HEK293T (cell line): ENCODE measurements at regions of chr22 and their contacts with region 1.

Region 1: GRCh38 chr22:39319270-39320022 is at the start of gene RPL3:
- DNase-seq: peak; percentile 97

Region 2: DNA sequence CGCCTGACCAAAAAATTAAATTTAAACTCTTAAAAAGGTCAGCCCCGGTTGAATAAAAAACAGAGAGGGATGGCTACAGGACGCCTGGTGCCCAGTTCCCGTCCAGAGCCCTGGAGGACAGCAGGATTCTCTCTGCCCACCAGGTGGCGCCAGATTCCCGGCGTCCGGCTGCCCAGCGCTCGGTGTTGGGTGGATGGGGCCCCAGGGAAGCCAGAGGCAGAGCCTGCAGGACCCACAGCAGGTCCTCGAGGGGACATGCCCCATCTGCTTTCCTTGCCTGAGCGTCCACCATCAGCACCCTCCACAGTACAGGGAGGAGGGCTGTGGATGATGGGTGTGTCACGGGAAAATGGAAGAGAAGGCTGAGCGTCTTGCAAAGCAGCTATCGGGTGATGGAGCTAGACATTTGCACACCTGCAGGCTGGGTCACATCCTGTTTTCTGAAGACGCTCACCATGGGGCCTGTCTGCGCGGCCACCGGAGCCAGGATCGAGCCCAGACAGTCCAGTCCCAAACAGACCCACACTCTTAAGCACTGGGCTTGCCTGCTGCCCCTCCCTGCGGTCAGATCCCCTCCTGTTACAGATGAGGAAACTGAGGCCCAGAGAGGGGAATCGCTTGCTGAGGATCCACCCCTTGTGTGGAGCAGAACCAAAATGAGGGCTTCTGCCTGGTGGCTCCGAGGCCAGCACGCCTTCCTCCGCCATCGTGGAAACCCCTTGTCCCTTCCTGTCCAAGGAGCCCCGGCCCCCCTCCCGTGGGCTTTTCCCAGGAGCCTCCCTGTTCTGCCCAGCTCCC is 148.4 kb before region 1 on chr22:
- CTCF ChIA-PET with region 1: interaction called, 16 read pairs
- POLR2A ChIA-PET with region 1: interaction called, 34 read pairs
- DNase-seq: peak; percentile 92

Region 3: DNA sequence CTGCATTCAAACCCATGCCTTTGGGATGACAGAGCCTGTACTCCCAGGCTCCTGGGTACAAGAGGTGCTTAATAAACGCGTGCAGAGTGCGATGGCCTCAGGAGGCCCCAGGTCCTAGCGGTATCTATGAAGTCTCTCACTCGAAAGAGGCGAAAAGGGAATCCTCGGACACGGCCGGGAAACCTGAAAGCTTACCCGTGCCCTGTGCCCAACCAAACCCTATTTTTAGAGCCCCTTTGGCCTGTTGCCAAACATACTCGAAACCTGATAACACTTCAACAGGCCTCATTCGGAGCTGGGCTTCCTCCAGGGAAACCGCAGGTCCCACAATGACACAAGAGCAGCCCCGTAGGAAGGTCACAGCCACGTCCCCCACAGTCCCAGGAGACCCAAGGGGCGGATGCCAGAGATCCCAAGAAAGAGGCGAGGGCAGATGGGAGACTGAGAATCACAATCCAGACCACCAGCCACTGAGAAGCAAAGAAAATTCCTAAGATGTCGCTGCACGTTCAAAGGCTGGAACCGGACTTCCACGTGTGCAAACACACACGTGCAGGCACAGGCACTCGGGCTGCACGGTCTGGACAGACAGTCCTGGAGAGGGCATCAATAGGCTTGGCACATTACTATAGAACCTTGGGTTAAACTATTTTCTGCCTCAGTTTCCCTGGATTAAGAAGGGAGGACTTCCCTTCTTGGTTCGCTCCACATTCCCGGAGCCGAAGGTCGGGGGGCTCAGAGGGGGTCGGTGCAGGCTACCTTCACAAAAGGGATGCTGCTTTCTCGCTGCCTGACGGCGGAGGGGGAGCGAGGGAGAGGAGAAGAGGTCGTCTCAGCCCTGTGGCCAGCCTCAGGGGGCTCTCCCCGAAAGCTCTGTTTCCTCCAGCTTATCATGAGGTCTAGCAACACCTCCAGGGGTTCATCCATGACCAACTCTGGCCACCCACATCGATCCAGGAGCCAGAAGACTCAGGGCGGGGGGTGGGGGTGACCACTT is 82.8 kb before region 1 on chr22:
- CTCF ChIA-PET with region 1: no interaction called
- POLR2A ChIA-PET with region 1: interaction called, 15 read pairs
- DNase-seq: no peak

Region 4: GRCh38 chr22:39332441-39333064 is 13.1 kb after region 1 on chr22:
- CTCF ChIA-PET with region 1: interaction called, 10 read pairs
- POLR2A ChIA-PET with region 1: interaction called, 176 read pairs
- DNase-seq: no peak

Region 5: DNA sequence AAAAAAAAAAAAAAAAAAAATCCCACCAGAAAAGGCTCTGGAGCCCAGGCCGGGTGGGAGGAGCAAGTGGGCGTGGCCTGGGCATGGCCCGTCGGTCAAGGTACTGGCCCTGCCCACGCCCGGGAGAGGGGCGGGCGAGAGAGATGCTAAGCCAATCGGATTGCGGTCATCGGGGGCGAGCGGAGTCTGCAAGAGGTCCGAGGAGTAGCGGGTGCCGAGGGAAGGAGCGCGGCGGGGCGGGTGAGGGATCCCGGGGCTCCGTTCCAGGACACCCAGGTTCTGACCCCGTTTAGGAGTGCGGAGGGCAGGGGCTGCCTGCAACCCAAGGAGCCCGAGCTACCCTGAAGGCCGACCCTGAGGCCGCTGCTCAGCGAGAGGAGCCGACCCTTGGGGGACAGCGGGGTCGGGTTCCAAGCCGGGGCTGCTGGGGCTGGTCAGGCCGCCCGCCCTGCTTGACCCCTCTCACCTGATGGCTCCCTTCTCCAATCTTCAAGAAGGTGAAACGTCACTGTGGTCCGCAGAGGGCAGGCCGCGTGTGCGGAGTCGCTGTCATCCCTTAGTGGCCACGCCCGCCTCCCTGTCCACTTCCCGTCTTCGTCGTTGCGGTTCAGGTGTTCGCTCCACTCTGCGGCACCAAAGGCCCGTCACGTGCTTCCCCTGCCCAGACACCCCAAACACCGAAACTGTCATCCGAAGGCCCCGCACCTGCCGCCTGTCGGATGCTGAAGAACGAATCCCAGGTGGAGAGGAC is 69.0 kb after region 1 on chr22:
- CTCF ChIA-PET with region 1: no interaction called
- POLR2A ChIA-PET with region 1: interaction called, 21 read pairs
- DNase-seq: peak; percentile 100

Region 6: GRCh38 chr22:39502109-39502788 is 182.8 kb after region 1 on chr22 and contains the start of gene MIEF1:
- CTCF ChIA-PET with region 1: no interaction called
- POLR2A ChIA-PET with region 1: interaction called, 11 read pairs
- DNase-seq: peak; percentile 99

Region 7: GRCh38 chr22:39559454-39560105 is 240.1 kb after region 1 on chr22:
- CTCF ChIA-PET with region 1: no interaction called
- POLR2A ChIA-PET with region 1: no interaction called
- DNase-seq: peak; percentile 51